WTC11 (cell line): ENCODE measurements at regions of chr9 and their contacts with region 1.

Region 1: GRCh38 chr9:94623253-94623652 is 16.1 kb downstream of the FBP1 start:
- DNase-seq: peak; percentile 79
- ATAC-seq: peak; percentile 91
- H3K4me3 Mint-ChIP-seq: no peak overlapping the region
- H3K27ac Mint-ChIP-seq: no peak overlapping the region
- H3K4me1 Mint-ChIP-seq: peaks cover 3% of the 10 kb centered on the region; the same call in 1 of the 2 replicates
- H3K27me3 Mint-ChIP-seq: no peaks in the 10 kb centered on the region
- CTCF ChIP-seq: peak; percentile 48; the same call in 1 of the 2 replicates

Region 2: DNA sequence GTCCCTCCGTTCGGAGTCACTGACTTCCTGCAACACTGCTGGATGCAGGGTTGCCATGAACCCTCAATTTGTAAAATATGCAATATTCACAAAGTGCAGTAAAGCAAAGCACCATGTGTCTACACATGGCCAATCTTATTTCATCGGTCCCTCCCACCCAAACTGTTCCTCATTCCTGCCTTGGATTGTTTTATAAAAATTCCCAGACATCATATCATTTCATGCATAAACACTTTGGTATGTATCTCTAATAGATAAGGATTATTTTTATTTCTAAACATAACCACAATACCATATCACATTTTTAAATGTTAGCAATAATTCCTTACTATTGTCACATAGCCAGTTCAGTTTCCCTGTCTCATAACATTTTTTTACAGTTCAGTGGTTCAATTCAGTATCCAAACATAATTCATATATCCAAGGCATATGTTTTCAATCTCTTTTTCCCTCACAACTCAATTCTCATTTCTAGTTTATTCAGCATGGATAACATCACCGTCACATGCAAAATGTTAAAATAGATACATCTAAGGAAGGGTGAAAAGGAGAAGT is 150.4 kb before region 1 on chr9:
- CTCF ChIA-PET with region 1: no interaction called
- POLR2A ChIA-PET with region 1: no interaction called
- DNase-seq: no peak
- ATAC-seq: no peak
- H3K4me3 Mint-ChIP-seq: no peak overlapping the region
- H3K27ac Mint-ChIP-seq: no peak overlapping the region
- H3K4me1 Mint-ChIP-seq: no peaks in the 10 kb centered on the region
- H3K27me3 Mint-ChIP-seq: peaks cover 8% of the 10 kb centered on the region
- CTCF ChIP-seq: no peak

Region 3: GRCh38 chr9:94577036-94577435 is 46.2 kb before region 1 on chr9:
- CTCF ChIA-PET with region 1: no interaction called
- POLR2A ChIA-PET with region 1: no interaction called
- DNase-seq: no peak
- ATAC-seq: no peak
- H3K4me3 Mint-ChIP-seq: no peak overlapping the region
- H3K27ac Mint-ChIP-seq: no peak overlapping the region
- H3K4me1 Mint-ChIP-seq: peaks cover 4% of the 10 kb centered on the region; the same call in 1 of the 2 replicates
- H3K27me3 Mint-ChIP-seq: peaks cover 5% of the 10 kb centered on the region
- CTCF ChIP-seq: no peak

Region 4: GRCh38 chr9:94611638-94612068 is 11.6 kb before region 1 on chr9:
- CTCF ChIA-PET with region 1: interaction called, 13 read pairs
- POLR2A ChIA-PET with region 1: interaction called, 3 read pairs
- DNase-seq: no peak
- ATAC-seq: no peak
- H3K4me3 Mint-ChIP-seq: no peak overlapping the region
- H3K27ac Mint-ChIP-seq: no peak overlapping the region
- H3K4me1 Mint-ChIP-seq: peaks cover 16% of the 10 kb centered on the region
- H3K27me3 Mint-ChIP-seq: no peaks in the 10 kb centered on the region
- CTCF ChIP-seq: no peak

Region 5: DNA sequence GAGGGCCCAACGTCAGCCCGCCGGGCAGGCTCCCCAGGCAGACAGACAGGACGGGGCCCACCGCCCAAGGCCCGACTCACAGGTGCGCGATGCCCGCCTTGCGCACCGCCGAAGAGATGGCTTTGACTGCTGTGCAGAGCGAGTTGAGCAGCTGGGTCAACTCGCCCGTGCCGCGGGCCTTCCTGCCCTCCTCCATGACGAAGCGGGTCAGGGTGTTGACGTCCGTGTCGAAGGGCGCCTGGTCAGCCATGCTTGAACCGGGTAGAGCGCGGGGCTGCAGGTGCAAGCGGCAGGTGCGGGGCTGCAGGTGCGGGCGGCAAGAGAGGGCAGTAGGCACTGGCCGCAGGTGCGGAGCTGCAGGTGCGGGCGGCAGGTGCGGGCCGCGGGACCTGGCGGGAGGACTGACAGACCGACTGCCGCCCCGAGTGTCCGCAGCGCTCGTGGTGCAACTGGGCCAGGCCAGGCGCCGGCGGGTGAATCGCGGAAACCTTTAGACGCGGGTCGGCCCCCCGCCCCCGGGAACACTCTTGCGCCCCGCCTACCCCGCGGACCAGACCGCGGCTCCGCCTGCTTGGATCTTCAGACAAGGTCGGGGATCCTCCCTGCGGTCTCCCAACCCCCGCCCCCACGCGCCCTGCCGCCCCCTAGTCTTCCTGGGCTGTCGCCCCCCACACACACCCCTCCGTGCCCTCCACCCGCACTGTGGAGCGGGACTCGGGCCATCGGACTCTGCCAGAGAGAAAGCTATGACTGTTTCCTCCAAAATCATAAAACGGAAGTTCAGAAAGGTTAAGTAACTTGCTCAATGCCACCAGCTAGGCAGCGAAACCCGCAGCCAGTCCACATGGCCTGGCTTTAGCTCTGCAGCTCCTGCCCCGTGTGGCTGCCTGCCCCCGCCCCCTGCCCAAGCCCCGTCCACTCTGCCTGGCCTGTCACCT is 16.1 kb after region 1 on chr9 and contains the start of gene FBP1:
- CTCF ChIA-PET with region 1: interaction called, 11 read pairs
- POLR2A ChIA-PET with region 1: no interaction called
- DNase-seq: peak; percentile 59
- ATAC-seq: peak; percentile 53
- H3K4me3 Mint-ChIP-seq: peak within 1 kb of the TSS; percentile 70
- H3K27ac Mint-ChIP-seq: no peak within 1 kb of the TSS
- H3K4me1 Mint-ChIP-seq: peaks cover 20% of the 10 kb centered on the region
- H3K27me3 Mint-ChIP-seq: peaks cover 84% of the 10 kb centered on the region
- CTCF ChIP-seq: no peak
- total RNA-seq, gene FBP1: 5.7 to 6.4 TPM (median 5.8 TPM) in 3 replicates